ENCODE measurements at regions of chr9 and their contacts with region 1.

Region 1: GRCh38 chr9:86434039-86434726 is 80.0 kb upstream of the TUT7 start:
- DNase-seq: no peak
- ATAC-seq: peak; percentile 46; the same call in 1 of the 2 replicates
- H3K4me3 Mint-ChIP-seq: peak overlapping the region; percentile 28; the same call in 1 of the 2 replicates
- H3K27ac Mint-ChIP-seq: no peak overlapping the region
- H3K4me1 Mint-ChIP-seq: peaks cover 15% of the 10 kb centered on the region
- H3K27me3 Mint-ChIP-seq: no peaks in the 10 kb centered on the region; the same call in 1 of the 2 replicates
- CTCF ChIP-seq: no peak

Region 2: DNA sequence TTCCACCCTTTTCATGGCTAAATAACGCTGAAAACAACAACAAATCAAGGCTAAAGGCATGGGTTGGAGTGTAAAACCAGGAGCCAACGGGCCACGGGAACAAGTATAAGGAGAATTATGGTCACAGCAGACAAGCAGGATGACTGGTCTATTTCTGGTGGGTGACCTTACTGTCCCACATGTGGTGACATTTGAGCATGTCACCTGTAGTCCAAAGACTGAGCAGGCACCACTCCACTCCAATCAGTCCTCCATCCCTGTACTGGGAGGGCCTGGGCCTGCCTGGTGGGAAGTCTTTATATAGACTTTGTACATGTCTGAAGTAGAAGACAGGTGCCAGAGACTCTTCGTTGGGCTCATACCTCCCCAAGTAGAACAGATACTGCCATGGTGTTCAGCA is 211.5 kb before region 1 on chr9:
- CTCF ChIA-PET with region 1: no interaction called
- POLR2A ChIA-PET with region 1: no interaction called
- DNase-seq: no peak
- ATAC-seq: no peak
- H3K4me3 Mint-ChIP-seq: no peak overlapping the region
- H3K27ac Mint-ChIP-seq: no peak overlapping the region
- H3K4me1 Mint-ChIP-seq: no peaks in the 10 kb centered on the region
- H3K27me3 Mint-ChIP-seq: no peaks in the 10 kb centered on the region
- CTCF ChIP-seq: no peak

Region 3: GRCh38 chr9:86413966-86414880 is 20.0 kb before region 1 on chr9:
- CTCF ChIA-PET with region 1: interaction called, 17 read pairs
- POLR2A ChIA-PET with region 1: no interaction called
- DNase-seq: no peak
- ATAC-seq: no peak
- H3K4me3 Mint-ChIP-seq: no peak overlapping the region
- H3K27ac Mint-ChIP-seq: no peak overlapping the region
- H3K4me1 Mint-ChIP-seq: no peaks in the 10 kb centered on the region
- H3K27me3 Mint-ChIP-seq: peaks cover 88% of the 10 kb centered on the region
- CTCF ChIP-seq: peak; percentile 61

Region 4: DNA sequence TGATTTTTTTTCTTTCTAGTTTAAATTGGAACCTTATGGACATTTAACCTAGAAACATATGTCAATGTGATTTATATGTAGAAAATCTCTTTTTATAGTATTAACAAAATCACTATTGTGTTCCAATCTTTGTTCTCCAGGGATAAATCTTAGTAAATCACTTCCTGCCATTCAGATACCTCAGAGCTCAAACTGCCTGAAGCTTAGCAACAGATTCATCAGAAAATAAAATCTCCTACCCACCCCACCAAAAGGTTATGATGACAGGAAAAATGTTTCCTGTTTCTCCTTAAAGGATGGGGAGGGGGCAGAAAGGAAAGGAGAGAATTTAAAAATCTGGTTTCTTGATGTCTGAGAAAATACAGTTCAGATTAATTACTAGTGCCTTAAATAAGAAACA is 25.0 kb after region 1 on chr9:
- CTCF ChIA-PET with region 1: interaction called, 14 read pairs
- POLR2A ChIA-PET with region 1: no interaction called
- DNase-seq: no peak
- ATAC-seq: no peak
- H3K4me3 Mint-ChIP-seq: no peak overlapping the region
- H3K27ac Mint-ChIP-seq: no peak overlapping the region
- H3K4me1 Mint-ChIP-seq: no peaks in the 10 kb centered on the region; the same call in 1 of the 2 replicates
- H3K27me3 Mint-ChIP-seq: peaks cover 2% of the 10 kb centered on the region; the same call in 1 of the 2 replicates
- CTCF ChIP-seq: no peak

Region 5: GRCh38 chr9:86486891-86487837 is 53.0 kb after region 1 on chr9:
- CTCF ChIA-PET with region 1: interaction called, 30 read pairs
- POLR2A ChIA-PET with region 1: no interaction called
- DNase-seq: no peak
- ATAC-seq: peak; percentile 61
- H3K4me3 Mint-ChIP-seq: no peak overlapping the region
- H3K27ac Mint-ChIP-seq: no peak overlapping the region
- H3K4me1 Mint-ChIP-seq: peaks cover 4% of the 10 kb centered on the region; the same call in 1 of the 2 replicates
- H3K27me3 Mint-ChIP-seq: no peaks in the 10 kb centered on the region; the same call in 1 of the 2 replicates
- CTCF ChIP-seq: peak; percentile 33; the same call in 1 of the 2 replicates

Region 6: DNA sequence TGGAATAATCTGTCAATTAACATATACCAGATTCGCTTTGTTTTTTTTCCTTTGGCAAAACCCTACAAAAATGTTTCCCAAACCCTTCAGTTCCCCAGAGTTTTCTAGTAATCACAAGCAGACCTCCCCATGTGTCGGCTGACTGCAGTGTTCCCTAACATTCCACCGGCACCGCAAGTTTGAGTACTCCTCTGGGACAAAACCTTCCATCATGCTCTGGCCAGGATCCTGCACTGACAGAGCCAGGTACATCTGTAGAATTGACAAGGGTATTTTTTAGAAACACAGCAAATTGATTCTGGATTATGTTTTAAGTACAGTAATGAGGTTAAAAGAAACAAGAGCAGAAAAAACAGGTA is 338.4 kb after region 1 on chr9:
- CTCF ChIA-PET with region 1: no interaction called
- POLR2A ChIA-PET with region 1: no interaction called
- DNase-seq: no peak
- ATAC-seq: no peak
- H3K4me3 Mint-ChIP-seq: no peak overlapping the region
- H3K27ac Mint-ChIP-seq: no peak overlapping the region
- H3K4me1 Mint-ChIP-seq: no peaks in the 10 kb centered on the region
- H3K27me3 Mint-ChIP-seq: peaks cover 3% of the 10 kb centered on the region; the same call in 1 of the 2 replicates
- CTCF ChIP-seq: no peak

Region 7: DNA sequence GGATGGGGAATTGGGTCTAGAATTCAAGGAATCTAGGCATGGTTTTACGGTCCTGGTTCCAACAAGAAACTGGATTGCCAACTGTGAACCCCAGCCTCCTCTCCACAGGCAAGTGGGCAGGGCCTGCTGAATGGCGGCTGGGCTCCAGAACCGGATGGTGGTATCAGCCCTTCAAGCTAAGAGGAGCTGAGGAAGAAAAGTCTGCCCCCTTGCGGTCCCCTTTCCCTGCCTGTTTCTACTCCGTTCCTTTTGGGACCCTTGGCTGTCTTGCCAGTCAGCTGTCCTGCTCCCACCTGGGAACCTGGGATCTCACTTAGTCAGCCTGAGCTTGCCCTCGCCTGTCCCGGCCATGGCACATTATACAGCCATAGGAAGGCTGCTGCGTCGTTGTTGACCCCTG is 829.1 kb after region 1 on chr9:
- CTCF ChIA-PET with region 1: interaction called, 13 read pairs
- POLR2A ChIA-PET with region 1: no interaction called
- DNase-seq: peak; percentile 90
- ATAC-seq: peak; percentile 99
- H3K4me3 Mint-ChIP-seq: no peak overlapping the region
- H3K27ac Mint-ChIP-seq: no peak overlapping the region
- H3K4me1 Mint-ChIP-seq: no peaks in the 10 kb centered on the region
- H3K27me3 Mint-ChIP-seq: no peaks in the 10 kb centered on the region
- CTCF ChIP-seq: peak; percentile 46; the same call in 1 of the 2 replicates

Measured in WTC11 (cell line).